ENCODE measurements at regions of chr22 and their contacts with region 1.

Region 1: GRCh38 chr22:37043828-37044538 is 7.6 kb upstream of the KCTD17 start:
- DNase-seq: peak; percentile 60 to 81 (median 80)
- H3K4me3 ChIP-seq: no peak overlapping the region
- H3K27ac ChIP-seq: no peak overlapping the region
- H3K4me1 ChIP-seq: peaks cover 0 to 4% (median 1%) of the 10 kb centered on the region in 4 experiments
- H3K27me3 ChIP-seq: peaks cover 0 to 2% (median 0%) of the 10 kb centered on the region in 5 experiments

Region 2: GRCh38 chr22:35430897-35431322 is 1613.1 kb before region 1 on chr22:
- CTCF ChIA-PET with region 1: no interaction called
- POLR2A ChIA-PET with region 1: no interaction called
- DNase-seq: peak; percentile 50 to 72 (median 64)
- H3K4me3 ChIP-seq: no peak overlapping the region
- H3K27ac ChIP-seq: no peak overlapping the region
- H3K4me1 ChIP-seq: no peaks in the 10 kb centered on the region
- H3K27me3 ChIP-seq: no peaks in the 10 kb centered on the region

Region 3: GRCh38 chr22:37032546-37033460 is 11.2 kb before region 1 on chr22:
- CTCF ChIA-PET with region 1: interaction called, 23 read pairs
- POLR2A ChIA-PET with region 1: no interaction called
- DNase-seq: no peak
- H3K4me3 ChIP-seq: no peak overlapping the region
- H3K27ac ChIP-seq: no peak overlapping the region
- H3K4me1 ChIP-seq: no peaks in the 10 kb centered on the region
- H3K27me3 ChIP-seq: peaks cover 0 to 3% (median 0%) of the 10 kb centered on the region in 5 experiments

Measured in common myeloid progenitor, CD34-positive (primary cell).